Mucosa of descending colon (tissue), 3 donors: ENCODE measurements at regions of chr15 and their contacts with region 1.

Region 1: DNA sequence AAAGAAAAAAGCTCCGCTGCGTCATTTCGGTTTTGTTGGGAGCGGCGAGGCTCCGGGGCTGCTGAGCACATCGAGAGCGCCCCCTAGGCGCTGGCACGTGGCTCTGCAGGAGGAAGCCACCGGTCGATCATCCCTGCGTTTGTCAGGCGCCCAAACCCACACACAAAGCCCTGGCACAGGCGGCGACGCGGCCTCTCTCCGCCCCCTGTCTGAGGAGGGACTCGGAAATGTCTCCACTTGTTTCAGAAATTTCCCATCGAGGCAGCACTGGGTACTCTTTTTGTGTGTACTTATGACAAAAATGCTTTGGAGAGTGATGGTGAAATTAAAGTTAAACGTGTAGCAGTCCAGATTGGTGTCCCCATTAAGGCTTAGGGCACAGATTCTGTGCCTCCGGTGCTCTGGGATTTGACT is 407.3 kb upstream of the ONECUT1 start:
- DNase-seq: peak; percentile 52 to 70 (median 68)
- ATAC-seq: peak; percentile 89
- H3K4me3 ChIP-seq: no peak overlapping the region
- H3K4me1 ChIP-seq: no peaks in the 10 kb centered on the region
- CTCF ChIP-seq: peak; percentile 76

Region 2: GRCh38 chr15:52780172-52780980 is 417.1 kb before region 1 on chr15:
- intact Hi-C with region 1: loop called in 1 of 2 experiments (anchors 5 kb)
- DNase-seq: peak; percentile 46 to 80 (median 74)
- ATAC-seq: peak; percentile 70
- H3K4me3 ChIP-seq: no peak overlapping the region
- H3K4me1 ChIP-seq: peaks cover 2% of the 10 kb centered on the region
- CTCF ChIP-seq: peak; percentile 83